Activated T-helper 1 cell treated with anti-CD3 and anti-CD28 coated beads, Interleukin-12 subunit alpha, Interleukin-12 subunit beta, Interleukin-2, Interleukin-4 antibody, amounts not matched to agents 30 ng/mL and 10 ng/mL and 1 ng/mL, durations not matched to agents 14 hours and 24 hours and 36 hours (primary cell): ENCODE measurements at regions of chr21 and their contacts with region 1.

Region 1: GRCh38 chr21:14382835-14383594 is at the start of gene HSPA13:
- DNase-seq: peak; percentile 99
- H3K4me3 Mint-ChIP-seq: peak within 1 kb of the TSS; percentile 100
- H3K27ac Mint-ChIP-seq: peak within 1 kb of the TSS; percentile 100
- H3K4me1 Mint-ChIP-seq: peaks cover 52% of the 10 kb centered on the region
- H3K27me3 Mint-ChIP-seq: peaks cover 2% of the 10 kb centered on the region
- total RNA-seq, gene HSPA13: 43.6 and 50.4 TPM in 2 replicates

Region 2: GRCh38 chr21:14215971-14216641 is 166.9 kb before region 1 on chr21 and contains the start of gene RBM11:
- intact Hi-C with region 1: loop called (anchors 2 kb)
- DNase-seq: peak; percentile 59
- H3K4me3 Mint-ChIP-seq: peak within 1 kb of the TSS; percentile 83
- H3K27ac Mint-ChIP-seq: no peak within 1 kb of the TSS
- H3K4me1 Mint-ChIP-seq: peaks cover 5% of the 10 kb centered on the region
- H3K27me3 Mint-ChIP-seq: peaks cover 20% of the 10 kb centered on the region
- total RNA-seq, gene RBM11: 0.66 and 0.86 TPM in 2 replicates

Region 3: DNA sequence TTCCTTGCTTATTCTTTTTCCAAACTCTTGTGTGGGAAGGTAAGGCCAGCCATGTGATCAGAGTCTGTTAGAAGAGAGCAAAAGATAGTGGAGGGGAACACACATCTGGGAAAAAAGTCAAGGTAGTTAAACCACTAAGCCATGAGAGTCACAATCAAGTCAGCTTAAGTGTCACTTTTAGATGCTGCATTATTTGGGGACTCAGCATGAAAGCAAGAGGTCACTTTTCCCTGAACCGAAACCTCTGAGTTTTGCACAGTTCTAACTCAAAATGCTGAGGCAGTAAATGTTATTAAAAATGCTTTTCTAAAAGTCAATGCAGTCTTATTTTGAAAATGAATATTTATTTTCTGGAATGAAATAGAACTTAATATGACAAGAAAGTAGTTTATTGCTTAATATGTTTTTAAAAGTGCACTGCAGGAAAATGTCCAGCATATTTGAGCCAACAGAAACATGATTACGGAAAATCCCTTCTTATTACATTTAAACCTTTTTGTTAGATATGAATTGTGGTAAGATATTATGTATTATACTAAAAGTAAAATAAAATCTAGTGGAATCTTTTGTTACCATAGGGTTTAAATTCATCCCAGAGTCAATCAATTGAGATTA is 97.8 kb before region 1 on chr21:
- intact Hi-C with region 1: no loop called
- DNase-seq: no peak
- H3K4me3 Mint-ChIP-seq: no peak overlapping the region
- H3K27ac Mint-ChIP-seq: no peak overlapping the region
- H3K4me1 Mint-ChIP-seq: no peaks in the 10 kb centered on the region
- H3K27me3 Mint-ChIP-seq: peaks cover 13% of the 10 kb centered on the region

Region 4: DNA sequence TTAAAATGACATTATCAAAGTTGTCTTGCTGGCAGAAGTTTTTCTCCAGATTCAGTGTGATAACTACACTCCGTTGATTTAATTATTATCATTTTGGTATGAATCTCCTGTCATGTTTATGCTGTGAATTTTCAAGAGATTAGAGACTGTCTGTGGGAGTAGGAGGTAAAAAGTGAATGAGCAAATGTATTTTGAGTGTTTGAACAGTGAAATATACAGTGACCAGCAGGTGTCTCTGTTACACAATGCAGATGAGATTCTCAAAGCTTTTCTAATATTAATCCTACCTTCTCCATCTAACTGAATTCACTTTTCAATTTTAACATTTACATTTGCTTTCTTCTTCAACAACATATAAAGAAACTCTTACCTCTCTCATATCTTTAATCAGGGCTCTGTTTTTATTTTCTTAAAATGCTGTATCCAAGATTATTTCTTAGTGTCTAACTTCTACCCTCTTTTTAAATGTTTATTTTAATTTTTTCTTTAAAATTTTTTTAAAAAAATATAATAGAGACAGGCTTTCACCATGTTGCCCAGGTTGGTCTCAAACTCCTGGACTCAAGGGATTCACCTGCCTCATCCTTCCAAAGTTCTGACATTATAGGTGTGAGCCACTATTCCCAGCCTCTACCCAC is 20.8 kb after region 1 on chr21:
- intact Hi-C with region 1: loop called (anchors 2 kb)
- DNase-seq: no peak
- H3K4me3 Mint-ChIP-seq: no peak overlapping the region
- H3K27ac Mint-ChIP-seq: no peak overlapping the region
- H3K4me1 Mint-ChIP-seq: peaks cover 5% of the 10 kb centered on the region
- H3K27me3 Mint-ChIP-seq: no peaks in the 10 kb centered on the region

Region 5: GRCh38 chr21:14762734-14763694 is 380.0 kb after region 1 on chr21:
- intact Hi-C with region 1: loop called (anchors 2 kb)
- DNase-seq: no peak
- H3K4me3 Mint-ChIP-seq: no peak overlapping the region
- H3K27ac Mint-ChIP-seq: no peak overlapping the region
- H3K4me1 Mint-ChIP-seq: no peaks in the 10 kb centered on the region
- H3K27me3 Mint-ChIP-seq: peaks cover 2% of the 10 kb centered on the region

Region 6: GRCh38 chr21:15483138-15483780 is 1100.2 kb after region 1 on chr21:
- intact Hi-C with region 1: loop called (anchors 1 kb)
- DNase-seq: peak; percentile 57
- H3K4me3 Mint-ChIP-seq: no peak overlapping the region
- H3K27ac Mint-ChIP-seq: no peak overlapping the region
- H3K4me1 Mint-ChIP-seq: peaks cover 19% of the 10 kb centered on the region
- H3K27me3 Mint-ChIP-seq: peaks cover 4% of the 10 kb centered on the region